Calu3 (cell line): ENCODE measurements at regions of chr9 and their contacts with region 1.

Region 1: GRCh38 chr9:17462869-17463464 is 115.9 kb upstream of the SH3GL2 start:
- DNase-seq: peak; percentile 28
- H3K4me3 Mint-ChIP-seq: no peak overlapping the region
- H3K27ac Mint-ChIP-seq: no peak overlapping the region
- H3K4me1 Mint-ChIP-seq: no peaks in the 10 kb centered on the region
- H3K27me3 Mint-ChIP-seq: no peaks in the 10 kb centered on the region
- CTCF ChIP-seq: peak; percentile 17

Region 2: DNA sequence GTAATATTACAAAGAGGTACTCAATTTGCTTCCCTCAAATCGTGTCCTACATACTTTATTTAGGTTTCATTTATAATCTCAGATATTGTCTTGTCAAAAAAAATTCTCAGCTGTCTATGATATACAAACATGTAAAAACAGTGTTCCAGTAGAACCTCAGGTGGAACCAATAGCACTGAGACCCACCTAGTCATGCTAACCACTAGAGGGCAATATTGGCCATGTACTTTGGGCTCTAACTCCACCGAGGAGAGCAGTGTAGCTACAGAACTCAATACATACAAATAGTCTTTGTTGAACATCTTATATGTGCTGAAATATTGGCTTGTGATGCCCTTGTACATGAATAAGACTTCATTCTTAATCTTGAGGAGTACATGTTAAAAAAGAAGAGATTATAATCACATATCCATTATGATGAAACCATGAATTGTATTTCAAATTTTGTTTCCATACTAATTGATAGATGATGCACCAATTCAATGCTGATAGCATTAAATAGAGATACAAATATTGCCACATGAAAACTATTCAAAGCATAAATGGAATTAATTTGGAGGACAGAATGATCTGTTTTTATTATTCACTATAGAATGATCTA is 399.3 kb before region 1 on chr9:
- CTCF ChIA-PET with region 1: interaction called, 7 read pairs
- intact Hi-C with region 1: loop called (anchors 1 kb)
- DNase-seq: peak; percentile 20
- H3K4me3 Mint-ChIP-seq: no peak overlapping the region
- H3K27ac Mint-ChIP-seq: no peak overlapping the region
- H3K4me1 Mint-ChIP-seq: no peaks in the 10 kb centered on the region
- H3K27me3 Mint-ChIP-seq: no peaks in the 10 kb centered on the region
- CTCF ChIP-seq: peak; percentile 19

Region 3: GRCh38 chr9:17219261-17219660 is 243.7 kb before region 1 on chr9:
- CTCF ChIA-PET with region 1: no interaction called
- intact Hi-C with region 1: loop called (anchors 2 kb)
- DNase-seq: no peak
- H3K4me3 Mint-ChIP-seq: no peak overlapping the region
- H3K27ac Mint-ChIP-seq: no peak overlapping the region
- H3K4me1 Mint-ChIP-seq: no peaks in the 10 kb centered on the region
- H3K27me3 Mint-ChIP-seq: no peaks in the 10 kb centered on the region
- CTCF ChIP-seq: no peak